Naive thymus-derived CD4-positive, alpha-beta T cell (primary cell): ENCODE measurements at regions of chr9 and their contacts with region 1.

Region 1: DNA sequence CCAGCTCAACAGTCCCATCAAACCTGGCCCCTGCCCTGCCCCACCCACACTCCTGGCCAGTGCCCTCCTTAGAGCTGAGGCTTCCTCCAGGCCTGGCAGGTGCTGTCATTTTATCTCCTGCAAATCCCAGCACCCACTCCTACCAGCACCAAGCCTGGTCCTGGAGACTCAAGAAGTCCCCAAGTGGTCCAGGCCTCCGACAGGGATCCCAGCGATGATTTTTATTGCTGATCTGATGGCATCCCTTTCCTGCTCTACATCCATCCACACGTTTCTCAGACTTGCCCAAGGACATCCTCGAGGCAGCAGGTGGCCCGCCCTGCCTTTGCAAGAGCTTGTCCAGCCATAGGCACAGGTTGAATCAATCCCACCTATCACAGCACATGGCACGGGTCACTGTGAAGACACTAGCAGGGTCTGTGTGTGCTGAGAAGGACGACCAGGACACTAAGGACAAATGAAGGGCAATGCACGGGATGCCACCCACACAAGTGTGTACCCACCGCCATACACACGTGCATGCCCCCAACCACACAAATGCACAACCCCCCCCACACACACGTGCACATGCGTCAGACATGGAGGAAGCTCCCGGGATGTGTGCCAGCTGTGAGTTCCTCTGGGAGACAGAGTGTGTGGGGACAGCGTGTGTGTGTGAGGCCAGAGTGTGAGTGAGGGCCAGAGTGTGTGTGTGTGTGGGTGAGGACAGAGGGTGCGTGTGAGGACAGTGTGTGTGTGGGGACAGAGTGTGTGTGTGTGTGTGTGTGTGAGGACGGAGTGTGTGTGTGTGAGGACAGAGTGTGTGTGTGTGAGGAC is 62.4 kb upstream of the UBAC1 start:
- DNase-seq: no peak
- ATAC-seq: no peak
- H3K4me3 ChIP-seq: no peak overlapping the region
- H3K4me3 Mint-ChIP-seq: peak overlapping the region in 1 of 10 donors; percentile 58
- H3K27ac ChIP-seq: no peak overlapping the region
- H3K27ac Mint-ChIP-seq: peak overlapping the region in 1 of 9 donors; percentile 76
- H3K4me1 ChIP-seq: no peaks in the 10 kb centered on the region
- H3K4me1 Mint-ChIP-seq: peaks cover 0 to 19% (median 10%) of the 10 kb centered on the region in 7 donors
- H3K27me3 ChIP-seq: no peaks in the 10 kb centered on the region
- H3K27me3 Mint-ChIP-seq: no peaks in the 10 kb centered on the region

Region 2: DNA sequence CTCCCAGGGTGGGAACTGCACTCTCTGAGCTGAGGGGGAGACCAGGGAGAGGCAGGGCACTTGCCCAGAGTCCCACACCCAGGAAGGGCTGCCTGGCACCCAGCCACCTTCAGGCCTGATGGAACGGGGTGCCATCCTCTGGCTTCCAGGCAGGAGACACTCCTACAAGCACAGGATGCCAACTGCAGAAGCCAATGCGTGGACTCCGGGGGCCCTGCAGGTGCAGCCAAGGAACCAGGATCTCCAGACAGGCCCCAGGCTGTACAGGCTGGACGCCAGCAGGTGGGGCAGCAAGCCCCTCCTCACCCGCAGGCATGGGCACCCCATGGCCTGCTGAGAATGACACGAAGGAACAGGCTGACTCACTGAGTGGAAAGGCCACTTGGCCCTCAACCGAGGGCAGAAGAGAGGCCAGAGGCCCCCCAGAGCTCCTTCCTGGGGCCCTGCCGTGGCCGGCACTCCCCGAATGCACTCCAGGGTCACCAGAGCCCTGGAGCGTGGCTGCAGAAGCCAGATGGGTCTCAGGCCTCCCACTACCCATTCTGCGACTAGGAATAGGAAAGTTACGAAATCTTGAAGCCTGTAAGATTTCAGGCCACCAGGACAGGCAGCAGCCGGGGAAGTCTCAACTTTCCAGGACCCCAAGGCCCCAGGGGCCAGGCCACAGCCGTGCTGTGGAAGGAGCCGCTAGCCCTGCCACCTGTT is 55.7 kb after region 1 on chr9:
- CTCF ChIA-PET with region 1: no interaction called
- POLR2A ChIA-PET with region 1: no interaction called
- intact Hi-C with region 1: loop called in 1 of 2 experiments (anchors 10 kb)
- DNase-seq: no peak
- ATAC-seq: peak; percentile 33
- H3K4me3 ChIP-seq: no peak overlapping the region
- H3K4me3 Mint-ChIP-seq: no peak overlapping the region
- H3K27ac ChIP-seq: no peak overlapping the region
- H3K27ac Mint-ChIP-seq: no peak overlapping the region
- H3K4me1 ChIP-seq: peaks cover 0 to 4% of the 10 kb centered on the region in 2 donors
- H3K4me1 Mint-ChIP-seq: peaks cover 2 to 33% (median 21%) of the 10 kb centered on the region in 7 donors
- H3K27me3 ChIP-seq: no peaks in the 10 kb centered on the region
- H3K27me3 Mint-ChIP-seq: peaks cover 0 to 6% (median 0%) of the 10 kb centered on the region in 5 donors